ENCODE measurements at regions of chr9 and their contacts with region 1.

Region 1: GRCh38 chr9:112333639-112334431 is 416 bp upstream of the PTBP3 start:
- DNase-seq: peak; percentile 85
- ATAC-seq: peak; percentile 87
- H3K4me3 Mint-ChIP-seq: peak overlapping the region; percentile 94
- H3K27ac Mint-ChIP-seq: peak overlapping the region; percentile 96
- H3K4me1 Mint-ChIP-seq: peaks cover 40% of the 10 kb centered on the region
- H3K27me3 Mint-ChIP-seq: no peaks in the 10 kb centered on the region
- CTCF ChIP-seq: no peak

Region 2: DNA sequence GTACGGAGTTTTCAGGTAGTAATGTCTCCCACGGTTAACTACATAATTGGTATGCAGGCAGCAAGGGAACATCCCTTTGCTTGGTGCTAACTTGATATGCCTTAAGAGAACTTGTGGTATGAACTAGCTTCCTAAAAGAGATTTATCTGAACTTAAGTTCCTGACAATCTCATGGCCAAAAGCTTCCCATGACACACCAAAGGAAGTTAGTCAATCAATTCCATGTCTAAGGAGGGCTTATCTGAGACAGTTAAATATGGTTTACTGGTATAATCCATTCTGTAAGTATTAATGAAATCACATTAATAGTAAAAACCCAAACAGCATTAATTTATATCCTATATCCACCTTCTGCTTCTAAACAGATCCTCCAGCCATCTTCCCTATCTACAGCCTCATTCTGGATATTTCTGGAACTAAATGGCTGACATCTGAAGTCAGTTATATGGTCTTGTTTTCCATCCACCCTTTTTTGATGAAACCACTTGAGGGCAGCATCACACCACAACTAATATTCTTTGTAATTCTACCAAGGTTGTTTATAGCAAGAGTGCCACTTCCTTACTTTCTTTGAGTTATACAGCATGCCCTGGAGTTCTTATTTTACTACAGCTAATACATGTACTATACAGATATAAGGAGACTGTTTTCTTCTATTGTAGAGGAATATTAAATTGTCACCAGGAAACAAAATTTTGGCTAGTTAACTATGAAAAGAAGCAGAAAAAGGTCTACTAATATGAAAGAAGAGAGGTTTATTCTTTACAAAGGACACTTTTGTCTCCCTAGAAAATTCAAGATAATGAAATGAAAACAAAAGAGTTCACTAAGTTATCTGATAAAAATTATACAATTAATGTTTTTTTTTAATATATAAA is 573.8 kb before region 1 on chr9:
- CTCF ChIA-PET with region 1: no interaction called
- POLR2A ChIA-PET with region 1: no interaction called
- intact Hi-C with region 1: loop called (anchors 1 kb)
- DNase-seq: no peak
- ATAC-seq: peak; percentile 84
- H3K4me3 Mint-ChIP-seq: no peak overlapping the region
- H3K27ac Mint-ChIP-seq: no peak overlapping the region
- H3K4me1 Mint-ChIP-seq: peaks cover 4% of the 10 kb centered on the region
- H3K27me3 Mint-ChIP-seq: no peaks in the 10 kb centered on the region
- CTCF ChIP-seq: peak; percentile 55

Region 3: DNA sequence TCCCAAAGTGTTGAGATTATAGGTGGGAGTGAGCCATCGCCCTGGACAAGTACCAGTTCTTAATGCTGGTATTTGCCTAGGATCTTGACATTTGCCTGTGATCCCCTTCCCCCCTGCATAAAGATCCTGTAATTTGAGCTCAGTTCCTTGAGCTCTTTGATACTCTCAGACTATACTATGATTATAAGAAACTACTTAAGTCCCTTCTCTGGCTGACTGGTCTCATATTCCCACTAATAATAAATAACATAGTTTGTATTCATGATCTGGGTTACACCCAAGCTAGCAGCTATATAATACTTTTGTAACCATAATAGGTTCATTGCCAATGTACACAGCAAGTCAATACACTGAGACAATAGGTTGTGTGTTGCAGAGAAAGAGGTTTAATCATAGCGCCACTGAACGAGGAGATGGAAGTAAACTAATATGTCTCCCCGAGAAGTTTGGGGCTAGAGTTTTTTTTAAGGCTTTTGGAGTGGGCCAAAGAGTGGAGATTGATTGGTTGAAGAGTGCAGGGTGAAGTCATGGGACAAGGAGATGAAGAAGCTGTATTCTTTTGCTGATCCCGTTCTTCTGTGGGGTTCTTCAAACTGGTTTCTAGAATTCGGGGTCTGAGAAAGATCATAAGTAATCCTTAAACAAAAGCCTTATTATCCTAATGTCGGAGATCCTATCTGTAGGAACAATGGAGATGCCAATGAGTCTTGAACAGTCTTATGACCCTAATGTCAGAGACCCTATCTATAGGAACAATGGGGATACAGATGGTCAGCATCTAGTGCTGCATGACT is 518.4 kb before region 1 on chr9:
- CTCF ChIA-PET with region 1: no interaction called
- POLR2A ChIA-PET with region 1: no interaction called
- intact Hi-C with region 1: no loop called
- DNase-seq: no peak
- ATAC-seq: no peak
- H3K4me3 Mint-ChIP-seq: no peak overlapping the region
- H3K27ac Mint-ChIP-seq: no peak overlapping the region
- H3K4me1 Mint-ChIP-seq: peaks cover 5% of the 10 kb centered on the region
- H3K27me3 Mint-ChIP-seq: no peaks in the 10 kb centered on the region
- CTCF ChIP-seq: no peak

Region 4: DNA sequence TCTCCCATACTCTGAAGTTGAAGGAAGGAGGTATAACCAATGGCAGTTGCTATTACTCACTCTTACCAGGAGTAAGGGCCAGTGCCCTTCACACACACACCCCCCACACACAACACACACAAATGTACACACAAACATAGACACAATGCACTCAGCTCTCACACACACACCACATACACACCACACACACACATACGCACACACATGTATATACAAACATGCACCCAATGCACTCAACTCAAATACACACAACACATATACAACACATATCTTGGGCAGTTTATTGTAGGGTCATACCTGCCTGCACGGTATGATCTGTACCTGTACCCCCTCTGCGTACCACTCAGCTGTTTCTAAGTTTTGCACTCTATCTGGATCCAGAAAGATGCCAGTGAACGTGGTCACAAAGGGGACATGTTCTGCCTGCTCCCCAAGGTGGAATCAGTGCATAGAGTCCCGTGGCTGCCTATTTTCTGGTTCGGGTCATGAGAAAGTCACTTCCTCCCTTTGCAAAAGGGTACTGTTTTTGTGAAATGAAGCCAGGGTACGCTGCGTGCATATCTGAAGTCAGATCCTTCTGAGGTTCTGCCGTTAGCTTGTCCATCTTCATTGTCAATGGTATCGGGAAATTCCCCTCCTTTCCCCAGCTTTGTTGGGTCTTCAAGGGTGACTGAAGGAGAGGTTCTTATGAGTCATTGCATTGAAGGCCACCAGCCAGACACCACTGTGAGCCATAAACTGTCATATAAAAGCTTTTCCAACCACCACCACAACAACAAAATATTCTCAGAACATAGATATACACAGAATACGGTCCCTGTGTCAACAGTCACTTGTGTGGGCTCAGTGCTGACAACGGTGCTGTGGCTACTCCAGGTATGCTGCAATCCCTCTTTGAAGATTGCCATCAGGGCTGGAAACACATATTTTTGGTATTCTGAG is 305.3 kb before region 1 on chr9:
- CTCF ChIA-PET with region 1: no interaction called
- POLR2A ChIA-PET with region 1: interaction called, 4 read pairs
- intact Hi-C with region 1: loop called (anchors 5 kb)
- DNase-seq: peak; percentile 41
- ATAC-seq: peak; percentile 79
- H3K4me3 Mint-ChIP-seq: peak overlapping the region; percentile 82
- H3K27ac Mint-ChIP-seq: peak overlapping the region; percentile 91
- H3K4me1 Mint-ChIP-seq: peaks cover 77% of the 10 kb centered on the region
- H3K27me3 Mint-ChIP-seq: no peaks in the 10 kb centered on the region
- CTCF ChIP-seq: no peak

Region 5: GRCh38 chr9:112218908-112219307 is 114.9 kb before region 1 on chr9:
- CTCF ChIA-PET with region 1: no interaction called
- POLR2A ChIA-PET with region 1: no interaction called
- intact Hi-C with region 1: loop called (anchors 5 kb)
- DNase-seq: no peak
- ATAC-seq: peak; percentile 66
- H3K4me3 Mint-ChIP-seq: peak overlapping the region; percentile 1
- H3K27ac Mint-ChIP-seq: peak overlapping the region; percentile 26
- H3K4me1 Mint-ChIP-seq: peaks cover 20% of the 10 kb centered on the region
- H3K27me3 Mint-ChIP-seq: no peaks in the 10 kb centered on the region
- CTCF ChIP-seq: no peak

Region 6: DNA sequence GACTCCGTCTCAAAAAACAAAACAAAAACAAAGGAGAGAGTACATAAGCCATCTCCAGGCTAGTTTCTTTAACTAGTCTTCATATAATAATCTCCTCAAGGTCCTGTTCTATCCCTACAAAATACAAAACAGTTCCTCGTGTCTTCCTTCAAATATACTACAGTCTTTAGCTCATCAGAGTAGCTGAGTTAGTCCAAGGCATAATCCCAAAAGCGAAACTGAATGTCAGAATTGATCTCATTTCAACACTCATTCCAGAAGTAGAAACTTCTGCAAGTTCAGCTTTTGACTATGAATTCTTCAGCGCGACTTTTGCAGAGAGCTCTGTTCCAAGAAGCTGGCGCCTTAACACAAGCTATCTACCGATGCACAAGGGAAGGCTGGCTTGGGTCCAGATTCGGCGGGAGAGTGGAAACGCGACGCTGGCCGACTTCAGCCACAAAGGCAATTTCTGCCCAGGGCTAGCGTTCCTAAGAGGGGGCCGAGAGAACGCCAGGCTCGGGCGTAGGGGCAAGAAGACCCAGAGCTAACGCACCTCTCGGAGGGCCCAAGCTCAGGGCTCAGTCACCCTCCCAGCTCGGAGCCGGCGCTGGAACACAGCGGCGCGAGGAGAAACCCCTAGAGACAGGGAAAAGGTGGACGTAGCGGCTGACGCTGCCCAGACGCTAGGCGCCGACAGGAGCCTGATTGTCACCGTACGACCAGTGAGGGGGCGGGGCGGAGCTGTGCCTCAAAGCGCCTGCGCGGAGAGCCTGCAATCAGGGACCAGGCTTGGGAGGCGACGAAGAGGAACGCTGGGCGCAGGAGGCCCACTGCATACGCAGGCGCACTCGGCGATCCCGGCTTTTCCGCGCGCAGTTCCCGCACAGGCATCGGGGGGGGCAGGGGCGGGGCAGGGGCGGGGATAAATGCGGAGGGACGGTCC is 45.6 kb after region 1 on chr9:
- CTCF ChIA-PET with region 1: no interaction called
- POLR2A ChIA-PET with region 1: interaction called, 35 read pairs
- intact Hi-C with region 1: loop called (anchors 1 kb)
- DNase-seq: peak; percentile 96
- ATAC-seq: peak; percentile 91
- H3K4me3 Mint-ChIP-seq: peak overlapping the region; percentile 99
- H3K27ac Mint-ChIP-seq: peak overlapping the region; percentile 95
- H3K4me1 Mint-ChIP-seq: peaks cover 59% of the 10 kb centered on the region
- H3K27me3 Mint-ChIP-seq: no peaks in the 10 kb centered on the region
- CTCF ChIP-seq: no peak

Region 7: GRCh38 chr9:112750111-112750767 is 416.4 kb after region 1 on chr9 and contains the start of gene SNX30:
- CTCF ChIA-PET with region 1: no interaction called
- POLR2A ChIA-PET with region 1: no interaction called
- intact Hi-C with region 1: loop called (anchors 1 kb)
- DNase-seq: peak; percentile 90
- ATAC-seq: peak; percentile 90
- H3K4me3 Mint-ChIP-seq: peak within 1 kb of the TSS; percentile 93
- H3K27ac Mint-ChIP-seq: peak within 1 kb of the TSS; percentile 94
- H3K4me1 Mint-ChIP-seq: peaks cover 42% of the 10 kb centered on the region
- H3K27me3 Mint-ChIP-seq: no peaks in the 10 kb centered on the region
- CTCF ChIP-seq: no peak
- total RNA-seq, gene SNX30: 6.1 and 6.5 TPM in 2 replicates